Caco-2 (cell line): ENCODE measurements at regions of chr12 and their contacts with region 1.

Region 1: GRCh38 chr12:44497042-44497441 is 379.1 kb downstream of the NELL2 start:
- DNase-seq: peak in 1 of 2 experiments; percentile 30
- H3K4me3 ChIP-seq: no peak overlapping the region
- H3K4me3 Mint-ChIP-seq: no peak overlapping the region
- H3K27ac Mint-ChIP-seq: no peak overlapping the region
- H3K4me1 ChIP-seq: no peaks in the 10 kb centered on the region
- H3K4me1 Mint-ChIP-seq: no peaks in the 10 kb centered on the region
- H3K27me3 ChIP-seq: no peaks in the 10 kb centered on the region
- H3K27me3 Mint-ChIP-seq: peaks cover 2% of the 10 kb centered on the region
- CTCF ChIP-seq: peak; percentile 24 to 50

Region 2: GRCh38 chr12:44484855-44485254 is 12.2 kb before region 1 on chr12:
- CTCF ChIA-PET with region 1: no interaction called
- POLR2A ChIA-PET with region 1: no interaction called
- intact Hi-C with region 1: no loop called
- DNase-seq: no peak
- H3K4me3 ChIP-seq: no peak overlapping the region
- H3K4me3 Mint-ChIP-seq: no peak overlapping the region
- H3K27ac Mint-ChIP-seq: no peak overlapping the region
- H3K4me1 ChIP-seq: no peaks in the 10 kb centered on the region
- H3K4me1 Mint-ChIP-seq: no peaks in the 10 kb centered on the region
- H3K27me3 ChIP-seq: no peaks in the 10 kb centered on the region
- H3K27me3 Mint-ChIP-seq: no peaks in the 10 kb centered on the region
- CTCF ChIP-seq: no peak

Region 3: DNA sequence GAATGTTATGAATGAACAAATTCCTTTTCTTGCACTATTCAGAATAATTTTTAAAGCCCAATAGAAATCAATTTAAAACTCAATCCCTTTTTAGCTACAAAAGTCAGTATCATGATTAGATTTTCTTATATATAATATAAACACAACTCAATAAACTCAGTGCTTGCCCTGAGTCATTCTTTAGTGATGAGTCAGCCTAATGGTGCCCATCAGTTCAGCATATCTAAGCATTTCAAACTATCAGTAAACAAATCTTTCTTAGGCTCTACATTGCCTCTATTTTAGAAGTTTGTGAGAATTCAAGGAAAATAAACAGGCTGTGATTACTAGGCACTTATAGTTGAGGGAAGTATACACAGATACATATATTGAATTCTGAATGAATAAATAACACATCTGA is 199.5 kb after region 1 on chr12:
- CTCF ChIA-PET with region 1: no interaction called
- POLR2A ChIA-PET with region 1: interaction called, 4 read pairs
- intact Hi-C with region 1: loop called (anchors 2 kb)
- DNase-seq: no peak
- H3K4me3 ChIP-seq: no peak overlapping the region
- H3K4me3 Mint-ChIP-seq: no peak overlapping the region
- H3K27ac Mint-ChIP-seq: no peak overlapping the region
- H3K4me1 ChIP-seq: no peaks in the 10 kb centered on the region
- H3K4me1 Mint-ChIP-seq: no peaks in the 10 kb centered on the region
- H3K27me3 ChIP-seq: no peaks in the 10 kb centered on the region
- H3K27me3 Mint-ChIP-seq: peaks cover 15% of the 10 kb centered on the region
- CTCF ChIP-seq: no peak

Region 4: DNA sequence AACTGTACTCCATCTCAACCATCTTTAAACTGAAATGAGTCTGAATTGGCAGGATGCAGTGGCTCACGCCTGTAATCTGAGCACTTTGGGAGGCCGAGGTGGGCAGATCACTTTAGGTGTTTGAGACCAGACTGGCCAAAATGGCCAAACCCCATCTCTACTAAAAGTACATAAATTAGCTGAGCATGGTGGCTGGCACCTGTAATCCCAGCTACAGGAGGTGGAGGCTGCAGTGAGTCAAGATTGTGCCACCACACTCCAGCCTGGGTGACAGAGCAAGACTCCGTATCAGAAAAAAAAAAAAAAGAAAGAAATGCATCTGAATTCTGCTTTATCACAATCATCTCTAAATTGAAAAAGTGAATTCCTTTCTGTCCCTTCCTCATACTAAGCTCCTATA is 268.8 kb after region 1 on chr12:
- CTCF ChIA-PET with region 1: no interaction called
- POLR2A ChIA-PET with region 1: no interaction called
- intact Hi-C with region 1: loop called (anchors 10 kb)
- DNase-seq: no peak
- H3K4me3 ChIP-seq: no peak overlapping the region
- H3K4me3 Mint-ChIP-seq: no peak overlapping the region
- H3K27ac Mint-ChIP-seq: no peak overlapping the region
- H3K4me1 ChIP-seq: no peaks in the 10 kb centered on the region
- H3K4me1 Mint-ChIP-seq: no peaks in the 10 kb centered on the region
- H3K27me3 ChIP-seq: no peaks in the 10 kb centered on the region
- H3K27me3 Mint-ChIP-seq: peaks cover 3% of the 10 kb centered on the region
- CTCF ChIP-seq: no peak

Region 5: GRCh38 chr12:45050751-45051571 is 553.9 kb after region 1 on chr12 and contains the start of gene DBX2:
- CTCF ChIA-PET with region 1: no interaction called
- POLR2A ChIA-PET with region 1: no interaction called
- intact Hi-C with region 1: no loop called
- DNase-seq: no peak
- H3K4me3 ChIP-seq: peak within 1 kb of the TSS; percentile 1; the same call in 1 of the 2 replicates
- H3K4me3 Mint-ChIP-seq: peak within 1 kb of the TSS; percentile 52
- H3K27ac Mint-ChIP-seq: no peak within 1 kb of the TSS
- H3K4me1 ChIP-seq: no peaks in the 10 kb centered on the region
- H3K4me1 Mint-ChIP-seq: no peaks in the 10 kb centered on the region
- H3K27me3 ChIP-seq: no peaks in the 10 kb centered on the region; the same call in none of the 2 replicates
- H3K27me3 Mint-ChIP-seq: peaks cover 36% of the 10 kb centered on the region
- CTCF ChIP-seq: no peak
- total RNA-seq, gene DBX2: not detected in 2 replicates